HepG2 (cell line): ENCODE measurements at regions of chr19 and their contacts with region 1.

Region 1: GRCh38 chr19:41883821-41884733 is 1.1 kb downstream of the ARHGEF1 start:
- DNase-seq: peak; percentile 93
- ATAC-seq: peak; percentile 91
- H3K4me3 ChIP-seq: peak overlapping the region; percentile 87 to 95 (median 88)
- H3K27ac ChIP-seq: peak overlapping the region; percentile 71
- H3K4me1 ChIP-seq: peaks cover 51% of the 10 kb centered on the region
- H3K27me3 ChIP-seq: no peaks in the 10 kb centered on the region; a peak in 2 of 5 replicates
- CTCF ChIP-seq: peak; percentile 41
- EP300 ChIP-seq: peak; percentile 26 to 49; a peak in 2 of 4 replicates
- POLR2A ChIP-seq: peak; percentile 55 to 74; a peak in 3 of 4 replicates
- RAD21 ChIP-seq: no peak; the same call in none of the 2 replicates

Region 2: GRCh38 chr19:41844601-41845000 is 39.5 kb before region 1 on chr19 and contains the start of gene LYPD4:
- CTCF ChIA-PET with region 1: no interaction called
- POLR2A ChIA-PET with region 1: no interaction called
- in situ Hi-C with region 1: no loop called
- intact Hi-C with region 1: no loop called
- DNase-seq: no peak
- ATAC-seq: no peak
- H3K4me3 ChIP-seq: no peak within 1 kb of the TSS
- H3K27ac ChIP-seq: no peak within 1 kb of the TSS
- H3K4me1 ChIP-seq: peaks cover 18% of the 10 kb centered on the region
- H3K27me3 ChIP-seq: peaks cover 0 to 2% of the 10 kb centered on the region in 2 experiments; a peak in 2 of 5 replicates
- CTCF ChIP-seq: no peak
- EP300 ChIP-seq: no peak
- POLR2A ChIP-seq: no peak
- RAD21 ChIP-seq: no peak
- total RNA-seq, gene LYPD4: not detected in 2 replicates

Region 3: DNA sequence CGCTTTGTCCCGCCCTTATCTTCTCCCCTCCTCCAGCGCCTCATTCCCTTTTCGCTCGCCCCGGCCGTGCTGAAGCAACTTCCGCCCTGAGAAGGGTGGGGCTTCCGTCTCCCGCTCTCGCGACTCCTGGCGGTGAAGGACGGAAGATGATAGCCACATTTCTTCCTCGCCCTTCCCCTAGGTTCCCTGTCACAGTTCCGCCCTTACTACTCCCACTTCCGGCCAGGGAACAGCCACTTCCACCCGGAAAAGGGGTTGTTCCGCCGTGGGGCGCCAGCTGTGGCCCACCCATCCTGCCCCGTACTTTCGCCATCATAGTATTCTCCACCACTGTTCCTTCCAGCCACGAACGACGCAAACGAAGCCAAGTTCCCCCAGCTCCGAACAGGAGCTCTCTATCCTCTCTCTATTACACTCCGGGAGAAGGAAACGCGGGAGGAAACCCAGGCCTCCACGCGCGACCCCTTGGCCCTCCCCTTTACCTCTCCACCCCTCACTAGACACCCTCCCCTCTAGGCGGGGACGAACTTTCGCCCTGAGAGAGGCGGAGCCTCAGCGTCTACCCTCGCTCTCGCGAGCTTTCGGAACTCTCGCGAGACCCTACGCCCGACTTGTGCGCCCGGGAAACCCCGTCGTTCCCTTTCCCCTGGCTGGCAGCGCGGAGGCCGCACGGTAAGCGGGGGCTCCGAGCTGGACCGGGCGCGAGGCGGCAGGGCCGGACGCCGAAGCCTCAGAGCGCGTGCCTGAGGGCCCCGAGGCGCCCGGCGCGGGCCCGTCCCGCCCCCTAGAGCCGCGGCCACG is 24.3 kb before region 1 on chr19 and contains the start of gene RPS19:
- CTCF ChIA-PET with region 1: no interaction called
- POLR2A ChIA-PET with region 1: interaction called, 26 read pairs
- in situ Hi-C with region 1: no loop called
- intact Hi-C with region 1: no loop called
- DNase-seq: peak; percentile 97
- ATAC-seq: peak; percentile 90
- H3K4me3 ChIP-seq: peak within 1 kb of the TSS; percentile 85 to 99 (median 95)
- H3K27ac ChIP-seq: peak within 1 kb of the TSS; percentile 84
- H3K4me1 ChIP-seq: peaks cover 44% of the 10 kb centered on the region
- H3K27me3 ChIP-seq: peaks cover 0 to 6% of the 10 kb centered on the region in 2 experiments; a peak in 2 of 5 replicates
- CTCF ChIP-seq: peak; percentile 82
- EP300 ChIP-seq: peak; percentile 24 to 28; a peak in 1 of 4 replicates
- POLR2A ChIP-seq: peak; percentile 80 to 92
- RAD21 ChIP-seq: no peak; the same call in none of the 2 replicates
- total RNA-seq, gene RPS19: 4,758 and 5,028 TPM in 2 replicates

Region 4: DNA sequence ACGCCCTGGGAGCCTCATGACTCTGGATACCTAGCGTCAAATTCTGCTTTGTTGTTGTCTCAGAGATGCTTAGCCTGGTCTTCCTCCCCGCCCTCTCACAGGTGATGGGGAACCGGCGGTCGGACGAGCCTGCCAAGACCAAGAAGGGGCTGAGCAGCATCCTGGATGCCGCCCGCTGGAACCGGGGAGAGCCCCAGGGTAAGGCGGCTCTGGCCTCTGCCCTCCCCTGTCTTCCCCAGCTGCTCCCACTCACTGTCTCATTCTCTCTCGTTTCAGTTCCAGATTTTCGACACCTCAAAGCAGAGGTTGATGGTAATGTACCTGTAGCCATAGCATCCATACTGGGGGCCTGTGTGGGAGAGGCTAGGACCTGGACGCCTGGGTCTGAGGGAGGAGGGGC is 10.3 kb after region 1 on chr19:
- CTCF ChIA-PET with region 1: no interaction called
- POLR2A ChIA-PET with region 1: no interaction called
- in situ Hi-C with region 1: no loop called
- intact Hi-C with region 1: no loop called
- DNase-seq: no peak
- ATAC-seq: no peak; the same call in 2 of the 3 replicates
- H3K4me3 ChIP-seq: no peak overlapping the region
- H3K27ac ChIP-seq: no peak overlapping the region
- H3K4me1 ChIP-seq: peaks cover 5% of the 10 kb centered on the region
- H3K27me3 ChIP-seq: no peaks in the 10 kb centered on the region
- CTCF ChIP-seq: no peak
- EP300 ChIP-seq: no peak
- POLR2A ChIP-seq: no peak
- RAD21 ChIP-seq: no peak

Region 5: GRCh38 chr19:41934849-41935374 is 50.8 kb after region 1 on chr19:
- CTCF ChIA-PET with region 1: interaction called, 4 read pairs
- POLR2A ChIA-PET with region 1: no interaction called
- in situ Hi-C with region 1: loop called (anchors 10 kb)
- intact Hi-C with region 1: no loop called
- DNase-seq: peak; percentile 58
- ATAC-seq: peak; percentile 80
- H3K4me3 ChIP-seq: no peak overlapping the region
- H3K27ac ChIP-seq: no peak overlapping the region
- H3K4me1 ChIP-seq: no peaks in the 10 kb centered on the region
- H3K27me3 ChIP-seq: peaks cover 12 to 76% of the 10 kb centered on the region in 2 experiments; a peak in 4 of 5 replicates
- CTCF ChIP-seq: peak; percentile 89
- EP300 ChIP-seq: no peak
- POLR2A ChIP-seq: no peak
- RAD21 ChIP-seq: peak; percentile 59

Region 6: GRCh38 chr19:41959056-41960053 is 75.3 kb after region 1 on chr19 and contains the start of gene RABAC1:
- CTCF ChIA-PET with region 1: no interaction called
- POLR2A ChIA-PET with region 1: interaction called, 11 read pairs
- in situ Hi-C with region 1: loop called (anchors 5 kb)
- intact Hi-C with region 1: no loop called
- DNase-seq: peak; percentile 83
- ATAC-seq: peak; percentile 88
- H3K4me3 ChIP-seq: peak within 1 kb of the TSS; percentile 95 to 99 (median 98)
- H3K27ac ChIP-seq: peak within 1 kb of the TSS; percentile 73
- H3K4me1 ChIP-seq: peaks cover 32% of the 10 kb centered on the region
- H3K27me3 ChIP-seq: no peaks in the 10 kb centered on the region; a peak in 1 of 5 replicates
- CTCF ChIP-seq: peak; percentile 42
- EP300 ChIP-seq: 0 out of 4 replicates have a peak, but pooled peaks of 1 of the 2 experiments have one; percentile 36
- POLR2A ChIP-seq: peak; percentile 13 to 59; a peak in 3 of 4 replicates
- RAD21 ChIP-seq: no peak
- total RNA-seq, gene RABAC1: 20.7 and 37.4 TPM in 2 replicates

Region 7: GRCh38 chr19:42028304-42029216 is 144.5 kb after region 1 on chr19:
- CTCF ChIA-PET with region 1: no interaction called
- POLR2A ChIA-PET with region 1: no interaction called
- in situ Hi-C with region 1: no loop called
- intact Hi-C with region 1: no loop called
- DNase-seq: no peak
- ATAC-seq: no peak; the same call in 2 of the 3 replicates
- H3K4me3 ChIP-seq: no peak overlapping the region
- H3K27ac ChIP-seq: no peak overlapping the region
- H3K4me1 ChIP-seq: peaks cover 6% of the 10 kb centered on the region; the same call in 1 of the 2 replicates
- H3K27me3 ChIP-seq: peaks cover 0 to 24% of the 10 kb centered on the region in 2 experiments; a peak in 3 of 5 replicates
- CTCF ChIP-seq: peak; percentile 50
- EP300 ChIP-seq: no peak
- POLR2A ChIP-seq: no peak
- RAD21 ChIP-seq: no peak